ENCODE measurements at regions of chr17 and their contacts with region 1.

Region 1: GRCh38 chr17:27879987-27880608 is 13.1 kb downstream of the LYRM9 start:
- DNase-seq: peak; percentile 89
- H3K4me3 Mint-ChIP-seq: no peak overlapping the region
- H3K27ac Mint-ChIP-seq: no peak overlapping the region
- H3K4me1 Mint-ChIP-seq: peaks cover 19% of the 10 kb centered on the region
- H3K27me3 Mint-ChIP-seq: no peaks in the 10 kb centered on the region

Region 2: DNA sequence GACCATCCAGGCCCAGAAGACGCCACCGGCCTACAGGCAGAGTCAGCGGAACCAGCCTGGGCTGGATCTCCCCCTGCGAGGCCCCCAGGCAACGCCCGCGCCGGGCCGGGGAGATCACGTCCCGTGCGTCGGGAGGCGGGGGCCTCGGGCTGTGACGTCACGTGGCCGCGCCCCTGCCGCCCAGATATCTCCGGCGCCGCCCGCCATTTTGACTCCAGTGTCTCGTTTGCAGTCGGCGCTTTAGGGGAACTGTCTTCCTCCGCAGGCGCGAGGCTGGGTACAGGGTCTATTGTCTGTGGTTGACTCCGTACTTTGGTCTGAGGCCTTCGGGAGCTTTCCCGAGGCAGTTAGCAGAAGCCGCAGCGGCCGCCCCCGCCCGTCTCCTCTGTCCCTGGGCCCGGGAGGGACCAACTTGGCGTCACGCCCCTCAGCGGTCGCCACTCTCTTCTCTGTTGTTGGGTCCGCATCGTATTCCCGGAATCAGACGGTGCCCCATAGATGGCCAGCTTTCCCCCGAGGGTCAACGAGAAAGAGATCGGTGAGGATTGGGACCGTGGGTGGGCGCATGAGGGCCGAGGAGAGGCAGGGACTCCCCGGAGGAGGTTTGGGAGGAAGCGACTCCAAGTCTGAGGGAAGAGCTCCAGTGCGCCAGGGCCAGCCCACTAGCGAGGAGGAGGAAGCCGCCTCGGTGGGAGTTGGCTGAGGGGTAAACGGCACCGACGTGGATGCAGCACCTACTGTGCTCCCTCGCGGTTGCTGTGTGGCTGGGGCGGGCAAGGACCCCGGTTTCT is 586.0 kb before region 1 on chr17 and contains the start of gene WSB1:
- CTCF ChIA-PET with region 1: no interaction called
- intact Hi-C with region 1: loop called (anchors 10 kb)
- DNase-seq: peak; percentile 91
- H3K4me3 Mint-ChIP-seq: peak within 1 kb of the TSS; percentile 96
- H3K27ac Mint-ChIP-seq: peak within 1 kb of the TSS; percentile 99
- H3K4me1 Mint-ChIP-seq: peaks cover 36% of the 10 kb centered on the region
- H3K27me3 Mint-ChIP-seq: no peaks in the 10 kb centered on the region
- total RNA-seq, gene WSB1: 112 to 118 TPM

Region 3: DNA sequence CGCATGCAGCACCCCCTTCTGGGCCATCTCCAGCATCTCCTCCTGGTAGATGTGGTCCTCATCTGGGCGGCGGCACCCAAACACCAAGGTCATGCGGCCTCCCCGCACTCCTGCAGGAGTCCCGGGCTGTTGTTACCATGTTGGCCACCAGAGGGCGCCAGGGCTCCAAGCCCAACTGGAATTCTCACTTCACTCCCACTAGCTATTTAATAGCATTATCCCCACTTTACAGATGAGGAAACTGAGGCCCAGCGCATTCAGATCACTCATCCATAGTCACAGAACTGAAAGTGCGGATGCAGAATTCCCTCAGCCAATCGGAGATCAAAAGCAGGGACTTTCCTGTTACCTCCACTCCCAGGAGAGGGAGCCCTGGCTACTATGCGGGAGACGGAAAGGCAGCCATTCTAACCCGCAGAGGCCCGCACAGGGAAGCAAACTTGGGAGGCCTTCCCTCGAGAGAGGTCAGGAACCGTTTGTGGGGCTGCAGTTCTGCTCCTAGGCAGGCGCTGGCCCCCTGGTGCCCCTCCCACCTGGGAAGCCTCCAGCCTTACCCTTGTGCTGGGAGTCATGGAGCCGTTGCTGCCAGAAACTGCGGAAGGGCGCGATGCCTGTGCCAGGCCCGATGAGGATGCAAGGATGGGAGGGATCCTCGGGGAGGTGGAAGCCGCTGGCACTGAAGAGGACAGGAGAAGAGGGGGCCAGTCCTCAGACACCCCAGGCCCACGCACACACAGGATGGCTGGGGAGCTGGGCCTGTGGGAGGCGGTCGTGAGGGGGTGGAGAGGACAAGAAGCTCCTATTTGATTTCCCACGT is 119.8 kb before region 1 on chr17:
- CTCF ChIA-PET with region 1: interaction called, 213 read pairs
- intact Hi-C with region 1: loop called (anchors 1 kb)
- DNase-seq: peak; percentile 83
- H3K4me3 Mint-ChIP-seq: no peak overlapping the region
- H3K27ac Mint-ChIP-seq: no peak overlapping the region
- H3K4me1 Mint-ChIP-seq: no peaks in the 10 kb centered on the region
- H3K27me3 Mint-ChIP-seq: no peaks in the 10 kb centered on the region

Region 4: GRCh38 chr17:27793168-27793905 is 86.8 kb before region 1 on chr17:
- CTCF ChIA-PET with region 1: interaction called, 510 read pairs
- intact Hi-C with region 1: no loop called
- DNase-seq: no peak
- H3K4me3 Mint-ChIP-seq: no peak overlapping the region
- H3K27ac Mint-ChIP-seq: no peak overlapping the region
- H3K4me1 Mint-ChIP-seq: peaks cover 2% of the 10 kb centered on the region
- H3K27me3 Mint-ChIP-seq: peaks cover 37% of the 10 kb centered on the region

Region 5: GRCh38 chr17:27892866-27893769 is 13.0 kb after region 1 on chr17 and contains the start of gene LYRM9:
- CTCF ChIA-PET with region 1: interaction called, 75 read pairs
- intact Hi-C with region 1: no loop called
- DNase-seq: peak; percentile 92
- H3K4me3 Mint-ChIP-seq: peak within 1 kb of the TSS; percentile 75
- H3K27ac Mint-ChIP-seq: peak within 1 kb of the TSS; percentile 6
- H3K4me1 Mint-ChIP-seq: peaks cover 18% of the 10 kb centered on the region
- H3K27me3 Mint-ChIP-seq: peaks cover 7% of the 10 kb centered on the region
- total RNA-seq, gene LYRM9: 5.3 to 6.9 TPM

Region 6: GRCh38 chr17:27944546-27945332 is 64.6 kb after region 1 on chr17:
- CTCF ChIA-PET with region 1: no interaction called
- intact Hi-C with region 1: no loop called
- DNase-seq: no peak
- H3K4me3 Mint-ChIP-seq: no peak overlapping the region
- H3K27ac Mint-ChIP-seq: no peak overlapping the region
- H3K4me1 Mint-ChIP-seq: no peaks in the 10 kb centered on the region
- H3K27me3 Mint-ChIP-seq: no peaks in the 10 kb centered on the region

Region 7: DNA sequence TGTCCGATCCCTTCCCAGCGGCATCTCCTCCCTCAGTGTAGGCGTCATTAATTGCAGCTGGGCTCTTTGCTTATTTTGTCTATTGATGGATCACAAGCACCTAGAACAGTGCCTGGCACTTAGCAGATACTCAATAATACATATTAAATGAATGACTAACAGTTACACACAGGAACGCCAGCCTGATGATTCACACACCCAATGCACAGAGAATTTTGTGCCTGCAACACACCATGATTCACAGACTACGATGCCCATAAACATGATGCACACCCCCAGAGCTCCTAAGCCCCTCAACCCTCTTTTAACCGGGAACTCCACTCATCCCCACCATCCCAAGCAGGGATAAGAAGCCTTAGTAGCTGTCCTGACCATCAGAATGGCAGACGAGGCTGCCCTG is 372.3 kb after region 1 on chr17:
- CTCF ChIA-PET with region 1: interaction called, 6 read pairs
- intact Hi-C with region 1: loop called (anchors 5 kb)
- DNase-seq: no peak
- H3K4me3 Mint-ChIP-seq: no peak overlapping the region
- H3K27ac Mint-ChIP-seq: no peak overlapping the region
- H3K4me1 Mint-ChIP-seq: peaks cover 5% of the 10 kb centered on the region
- H3K27me3 Mint-ChIP-seq: peaks cover 4% of the 10 kb centered on the region

Measured in activated naive CD4-positive, alpha-beta T cell treated with anti-CD3 and anti-CD28 coated beads for 36 hours (primary cell).